ENCODE measurements at regions of chr3 and their contacts with region 1.

Region 1: GRCh38 chr3:42839616-42840015 is 30.4 kb downstream of the ACKR2 start:
- DNase-seq: peak; percentile 35 to 47 (median 40)
- H3K4me3 ChIP-seq: no peak overlapping the region
- H3K4me3 Mint-ChIP-seq: no peak overlapping the region
- H3K27ac ChIP-seq: no peak overlapping the region
- H3K27ac Mint-ChIP-seq: no peak overlapping the region
- H3K4me1 ChIP-seq: no peaks in the 10 kb centered on the region
- H3K4me1 Mint-ChIP-seq: peaks cover 13% of the 10 kb centered on the region
- H3K27me3 ChIP-seq: no peaks in the 10 kb centered on the region
- H3K27me3 Mint-ChIP-seq: peaks cover 0 to 4% (median 2%) of the 10 kb centered on the region in 3 donors
- CTCF ChIP-seq: peak; percentile 75

Region 2: GRCh38 chr3:42288385-42288784 is 551.2 kb before region 1 on chr3:
- intact Hi-C with region 1: no loop called
- DNase-seq: no peak
- H3K4me3 ChIP-seq: no peak overlapping the region
- H3K4me3 Mint-ChIP-seq: no peak overlapping the region
- H3K27ac ChIP-seq: no peak overlapping the region
- H3K27ac Mint-ChIP-seq: no peak overlapping the region
- H3K4me1 ChIP-seq: no peaks in the 10 kb centered on the region
- H3K4me1 Mint-ChIP-seq: no peaks in the 10 kb centered on the region
- H3K27me3 ChIP-seq: no peaks in the 10 kb centered on the region
- H3K27me3 Mint-ChIP-seq: peaks cover 1 to 13% (median 8%) of the 10 kb centered on the region in 3 donors
- CTCF ChIP-seq: no peak

Region 3: DNA sequence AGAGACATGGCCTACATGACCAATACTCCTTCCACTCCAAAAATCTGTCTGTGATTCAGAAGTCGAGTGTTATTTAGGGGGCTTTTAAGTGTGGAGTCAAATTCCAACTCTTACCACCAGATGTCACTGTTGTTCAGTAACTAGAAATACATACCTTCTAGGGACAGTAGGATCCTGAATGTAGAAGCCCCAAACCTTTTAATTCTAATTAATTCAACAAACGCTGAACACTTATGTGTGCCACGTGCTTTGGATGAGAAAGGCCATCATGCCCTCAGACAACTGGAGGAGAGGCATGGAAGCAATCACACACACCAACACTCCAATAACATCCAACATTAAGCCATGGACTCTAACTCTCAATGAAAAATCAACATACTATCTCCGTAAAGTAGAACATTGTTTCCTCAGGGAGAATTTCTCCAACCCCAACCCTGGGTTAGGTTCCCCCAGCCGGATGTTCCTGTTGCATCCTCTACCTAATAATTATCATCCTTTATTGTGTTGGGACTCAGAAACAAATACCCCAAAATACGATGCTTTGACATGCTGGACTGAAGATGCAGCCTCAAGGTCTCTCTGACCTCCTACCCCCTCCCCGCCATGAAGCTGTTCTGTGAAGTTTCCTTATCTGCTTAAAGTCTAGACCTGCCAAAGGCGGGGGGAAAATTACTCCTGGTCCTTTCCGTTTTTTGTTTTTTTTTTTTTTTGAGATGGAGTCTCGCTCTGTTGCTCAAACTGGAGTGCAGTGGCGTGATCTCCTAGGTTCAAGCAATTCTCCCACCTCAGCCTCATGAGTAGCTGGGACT is 58.5 kb before region 1 on chr3:
- intact Hi-C with region 1: loop called in 1 of 2 experiments (anchors 10 kb)
- DNase-seq: peak; percentile 69 to 79 (median 77)
- H3K4me3 ChIP-seq: no peak overlapping the region
- H3K4me3 Mint-ChIP-seq: no peak overlapping the region
- H3K27ac ChIP-seq: no peak overlapping the region
- H3K27ac Mint-ChIP-seq: peak overlapping the region in 3 of 7 donors; percentile 35 to 56 (median 51)
- H3K4me1 ChIP-seq: no peaks in the 10 kb centered on the region
- H3K4me1 Mint-ChIP-seq: peaks cover 5% of the 10 kb centered on the region
- H3K27me3 ChIP-seq: no peaks in the 10 kb centered on the region
- H3K27me3 Mint-ChIP-seq: peaks cover 0 to 2% (median 1%) of the 10 kb centered on the region in 3 donors
- CTCF ChIP-seq: peak; percentile 84